AG04450 (cell line): ENCODE measurements at regions of chr1 and their contacts with region 1.

Region 1: GRCh38 chr1:110630839-110631663 is 24.9 kb upstream of the KCNA2 start:
- DNase-seq: no peak
- H3K4me3 ChIP-seq: no peak overlapping the region
- H3K27ac ChIP-seq: no peak overlapping the region
- H3K27me3 ChIP-seq: peaks cover 6% of the 10 kb centered on the region
- CTCF ChIP-seq: peak; percentile 80

Region 2: DNA sequence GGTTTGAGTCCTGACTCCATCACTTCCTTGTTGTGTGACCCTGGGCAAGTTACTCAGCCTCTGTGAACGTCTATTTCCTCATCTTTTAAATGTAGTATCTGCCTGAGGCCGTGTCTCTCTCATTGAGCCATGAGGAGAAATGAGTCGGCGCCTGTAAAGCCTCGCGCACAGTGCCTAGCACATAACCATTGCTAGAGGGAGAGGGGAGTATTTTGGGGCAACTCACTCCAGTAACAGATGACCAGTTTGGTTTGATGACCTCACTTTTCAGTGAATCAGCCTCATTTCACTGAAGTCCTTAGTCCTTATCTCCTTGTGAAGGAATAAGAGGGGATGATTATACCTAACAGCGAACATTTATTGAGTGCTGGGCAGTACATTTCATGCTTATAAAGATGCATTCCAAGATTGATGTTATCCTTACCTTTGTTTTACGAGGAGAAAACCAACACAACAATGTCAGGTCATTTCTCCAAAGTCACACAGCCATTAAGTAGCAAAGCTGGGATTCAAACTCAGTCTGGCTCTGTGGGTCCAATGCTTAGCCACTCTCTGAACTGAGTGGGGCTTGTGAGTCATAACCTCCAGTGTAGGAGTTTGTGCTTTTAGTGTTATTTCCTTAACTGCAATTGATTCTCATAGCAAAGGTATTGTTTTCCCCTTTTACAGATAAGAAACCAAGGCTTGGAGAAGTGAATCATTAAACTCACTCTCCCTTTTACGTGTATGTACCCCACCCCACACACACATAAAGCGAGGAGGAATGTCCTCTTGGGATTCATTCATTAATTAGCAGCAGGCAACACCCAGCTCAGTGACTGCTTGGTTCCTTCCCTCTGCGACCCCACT is 395.0 kb before region 1 on chr1:
- CTCF ChIA-PET with region 1: no interaction called
- POLR2A ChIA-PET with region 1: no interaction called
- DNase-seq: peak; percentile 20
- H3K4me3 ChIP-seq: no peak overlapping the region
- H3K27ac ChIP-seq: peak overlapping the region; percentile 47
- H3K27me3 ChIP-seq: no peaks in the 10 kb centered on the region
- CTCF ChIP-seq: no peak

Region 3: DNA sequence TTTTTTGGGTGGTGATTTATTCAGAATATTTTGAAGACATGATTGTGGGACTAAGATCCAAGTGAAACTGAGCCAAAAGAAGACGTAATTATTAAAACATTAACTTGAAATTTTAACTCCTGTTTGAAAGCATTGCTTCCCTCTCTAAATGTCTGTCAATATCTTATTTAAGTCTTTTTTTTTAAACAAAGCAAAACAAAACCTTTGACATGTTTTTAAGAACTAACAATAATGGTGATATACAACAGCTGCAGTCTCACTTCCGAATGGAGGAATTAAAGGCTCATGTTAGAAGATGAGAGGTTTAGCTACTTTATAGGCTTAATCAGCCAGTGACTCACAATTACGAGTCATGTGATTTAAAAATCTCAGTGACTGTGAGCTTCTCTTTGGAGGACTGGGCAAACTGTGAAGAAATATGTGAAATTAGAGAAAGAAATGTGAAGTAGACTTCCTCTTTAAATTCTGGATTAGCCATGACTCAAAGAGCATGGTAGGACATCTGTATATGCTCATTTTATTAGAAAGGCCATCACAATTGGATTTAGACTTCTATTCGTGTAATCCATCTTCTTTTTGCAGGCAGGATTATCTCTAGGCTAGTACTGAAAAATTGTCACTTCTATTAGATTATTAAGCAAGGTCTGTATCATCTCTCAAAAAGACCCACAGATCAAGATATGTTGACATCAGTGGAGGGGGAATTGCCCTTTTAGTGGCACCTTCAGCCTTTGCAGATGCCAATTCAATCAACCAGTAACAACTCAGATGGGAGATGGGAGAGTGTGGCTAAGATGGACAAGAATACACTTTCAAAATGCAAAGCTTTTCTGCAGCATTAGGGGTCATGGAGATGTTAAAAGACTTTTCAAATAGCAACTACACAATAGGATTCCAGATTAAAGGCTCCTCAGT is 15.0 kb after region 1 on chr1:
- CTCF ChIA-PET with region 1: interaction called, 10 read pairs
- POLR2A ChIA-PET with region 1: no interaction called
- DNase-seq: no peak
- H3K4me3 ChIP-seq: no peak overlapping the region
- H3K27ac ChIP-seq: no peak overlapping the region
- H3K27me3 ChIP-seq: no peaks in the 10 kb centered on the region
- CTCF ChIP-seq: no peak

Region 4: DNA sequence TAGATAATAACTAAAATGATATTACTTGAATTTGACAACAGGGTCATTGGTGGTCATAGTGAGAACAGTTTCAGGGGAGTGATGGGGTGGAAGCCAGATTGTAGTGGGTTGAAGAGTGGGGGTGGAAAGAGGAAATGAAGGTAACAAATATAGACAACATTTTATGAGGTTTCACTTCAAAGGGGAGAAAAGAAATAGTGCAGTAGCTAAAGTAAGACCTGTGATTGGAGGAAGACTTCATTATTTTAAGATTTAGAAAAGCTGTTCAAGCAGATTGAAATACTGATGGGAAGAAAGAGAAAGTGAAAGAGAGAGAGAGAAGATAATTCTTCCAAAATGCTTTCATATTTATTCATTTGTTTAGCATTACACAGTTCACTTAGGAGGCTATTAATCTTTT is 95.7 kb after region 1 on chr1:
- CTCF ChIA-PET with region 1: no interaction called
- POLR2A ChIA-PET with region 1: no interaction called
- DNase-seq: no peak
- H3K4me3 ChIP-seq: no peak overlapping the region
- H3K27ac ChIP-seq: no peak overlapping the region
- H3K27me3 ChIP-seq: no peaks in the 10 kb centered on the region
- CTCF ChIP-seq: no peak

Region 5: DNA sequence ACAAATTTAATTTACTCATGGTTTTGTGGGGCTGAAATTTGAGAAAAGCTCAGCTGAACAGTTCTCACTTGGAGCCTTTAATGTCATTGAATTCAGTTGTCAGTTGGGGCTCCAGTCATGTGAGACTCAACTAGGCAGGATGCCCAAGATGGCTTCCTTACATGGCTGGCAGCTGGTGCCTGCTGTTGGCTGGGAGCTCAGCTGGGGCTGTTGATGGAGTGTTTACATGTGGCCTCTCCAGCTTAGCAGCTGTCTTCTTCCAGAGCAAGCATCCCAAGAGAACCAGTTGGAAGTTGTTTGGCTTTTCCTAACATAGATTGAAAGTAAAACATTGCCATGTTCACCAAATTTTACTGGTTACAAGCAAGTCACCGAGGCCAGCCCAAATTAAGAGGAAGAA is 125.5 kb after region 1 on chr1:
- CTCF ChIA-PET with region 1: no interaction called
- POLR2A ChIA-PET with region 1: no interaction called
- DNase-seq: no peak
- H3K4me3 ChIP-seq: no peak overlapping the region
- H3K27ac ChIP-seq: no peak overlapping the region
- H3K27me3 ChIP-seq: no peaks in the 10 kb centered on the region
- CTCF ChIP-seq: no peak